ENCODE measurements at regions of chr14 and their contacts with region 1.

Region 1: DNA sequence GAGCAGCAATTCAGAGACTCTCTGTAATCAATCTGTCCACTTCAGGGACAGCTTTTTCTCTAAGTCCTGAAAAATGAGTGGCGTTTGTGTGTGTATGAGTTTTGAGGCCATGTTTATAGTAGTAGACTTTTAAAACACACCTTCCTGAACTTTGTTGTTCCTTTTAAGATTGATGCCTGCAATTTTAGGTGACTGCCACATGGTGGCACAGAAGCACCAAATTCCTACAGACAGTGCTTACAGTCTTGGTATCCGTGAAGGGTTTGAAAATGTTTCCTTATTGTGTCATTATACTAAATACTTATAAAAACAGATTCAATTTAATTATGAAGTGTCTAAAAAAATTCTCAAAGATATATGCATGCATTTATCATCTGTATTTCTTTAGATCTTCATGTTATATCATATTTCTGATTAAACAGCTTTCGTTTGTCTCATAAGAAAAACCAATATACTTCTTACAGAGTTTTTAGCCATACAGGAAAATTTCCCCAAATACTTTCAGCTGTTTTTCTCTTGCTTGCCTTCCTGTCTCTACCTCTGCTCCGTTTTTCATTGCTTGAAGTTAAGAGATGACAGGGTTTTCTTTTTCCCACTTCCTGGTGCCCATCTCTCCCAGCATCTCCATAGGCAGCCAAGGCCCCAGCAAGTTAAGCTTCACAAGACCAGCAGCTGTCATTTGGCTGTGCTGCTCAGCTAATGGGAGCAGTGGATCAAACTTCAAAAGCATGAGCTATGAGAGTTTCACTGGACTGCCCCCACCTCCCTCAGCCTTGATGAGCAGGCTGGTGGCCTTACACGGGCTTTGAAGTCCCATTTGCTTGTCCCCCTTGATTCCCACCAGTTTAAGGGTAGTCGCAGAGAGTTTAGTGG is 259.6 kb downstream of the AKAP6 start:
- DNase-seq: peak; percentile 65
- ATAC-seq: peak; percentile 81
- H3K4me3 ChIP-seq: no peak overlapping the region
- H3K27ac ChIP-seq: no peak overlapping the region
- H3K4me1 ChIP-seq: peaks cover 5% of the 10 kb centered on the region
- H3K27me3 ChIP-seq: no peaks in the 10 kb centered on the region
- CTCF ChIP-seq: peak; percentile 87
- POLR2A ChIP-seq: peak; percentile 45; the same call in 1 of the 2 replicates
- RAD21 ChIP-seq: peak; percentile 91

Region 2: DNA sequence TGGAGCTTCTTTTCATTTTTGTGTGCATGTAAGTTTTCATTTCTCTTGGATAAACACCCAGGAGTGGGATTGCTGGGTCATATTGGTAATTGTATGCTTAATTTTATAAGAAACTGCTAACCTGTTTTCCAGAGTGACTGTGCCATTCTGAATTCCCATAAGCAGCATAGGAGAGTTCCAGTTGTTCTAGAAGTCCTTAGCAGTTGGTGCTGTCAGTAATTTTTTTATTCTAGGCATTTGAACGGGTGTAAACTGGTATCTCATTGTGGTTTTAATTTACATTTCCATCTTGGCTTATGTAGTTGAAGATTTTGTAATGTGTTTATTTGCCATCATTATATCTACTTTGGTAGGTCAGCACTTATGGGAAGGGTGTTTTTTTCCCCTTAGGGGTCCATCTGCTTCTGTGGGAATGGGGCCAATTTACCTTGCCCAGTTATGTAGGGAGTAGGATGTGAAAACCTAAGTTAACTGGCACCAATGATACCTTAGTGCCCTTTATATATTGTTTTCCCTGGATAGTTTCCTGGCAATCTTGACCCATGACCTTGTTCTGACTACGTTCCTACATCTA is 56.7 kb before region 1 on chr14:
- CTCF ChIA-PET with region 1: no interaction called
- POLR2A ChIA-PET with region 1: no interaction called
- dilution Hi-C with region 1: no loop called
- in situ Hi-C with region 1: no loop called
- intact Hi-C with region 1: no loop called
- DNase-seq: no peak
- ATAC-seq: no peak
- H3K4me3 ChIP-seq: no peak overlapping the region
- H3K27ac ChIP-seq: no peak overlapping the region
- H3K4me1 ChIP-seq: no peaks in the 10 kb centered on the region
- H3K27me3 ChIP-seq: peaks cover 9% of the 10 kb centered on the region
- CTCF ChIP-seq: no peak
- POLR2A ChIP-seq: no peak
- RAD21 ChIP-seq: no peak

Region 3: GRCh38 chr14:32542507-32542906 is 46.2 kb before region 1 on chr14:
- CTCF ChIA-PET with region 1: no interaction called
- POLR2A ChIA-PET with region 1: no interaction called
- dilution Hi-C with region 1: no loop called
- in situ Hi-C with region 1: no loop called
- intact Hi-C with region 1: no loop called
- DNase-seq: no peak
- ATAC-seq: no peak
- H3K4me3 ChIP-seq: no peak overlapping the region
- H3K27ac ChIP-seq: no peak overlapping the region
- H3K4me1 ChIP-seq: no peaks in the 10 kb centered on the region
- H3K27me3 ChIP-seq: 0 out of 2 replicates have a peak, but pooled peaks cover 2% of the 10 kb centered on the region
- CTCF ChIP-seq: no peak
- POLR2A ChIP-seq: no peak
- RAD21 ChIP-seq: no peak

Region 4: GRCh38 chr14:32833168-32833567 is 244.5 kb after region 1 on chr14:
- CTCF ChIA-PET with region 1: no interaction called
- POLR2A ChIA-PET with region 1: no interaction called
- dilution Hi-C with region 1: no loop called
- in situ Hi-C with region 1: no loop called
- intact Hi-C with region 1: loop called (anchors 5 kb)
- DNase-seq: no peak
- ATAC-seq: no peak
- H3K4me3 ChIP-seq: no peak overlapping the region
- H3K27ac ChIP-seq: no peak overlapping the region
- H3K4me1 ChIP-seq: no peaks in the 10 kb centered on the region
- H3K27me3 ChIP-seq: no peaks in the 10 kb centered on the region
- CTCF ChIP-seq: no peak
- POLR2A ChIP-seq: no peak
- RAD21 ChIP-seq: no peak

Region 5: DNA sequence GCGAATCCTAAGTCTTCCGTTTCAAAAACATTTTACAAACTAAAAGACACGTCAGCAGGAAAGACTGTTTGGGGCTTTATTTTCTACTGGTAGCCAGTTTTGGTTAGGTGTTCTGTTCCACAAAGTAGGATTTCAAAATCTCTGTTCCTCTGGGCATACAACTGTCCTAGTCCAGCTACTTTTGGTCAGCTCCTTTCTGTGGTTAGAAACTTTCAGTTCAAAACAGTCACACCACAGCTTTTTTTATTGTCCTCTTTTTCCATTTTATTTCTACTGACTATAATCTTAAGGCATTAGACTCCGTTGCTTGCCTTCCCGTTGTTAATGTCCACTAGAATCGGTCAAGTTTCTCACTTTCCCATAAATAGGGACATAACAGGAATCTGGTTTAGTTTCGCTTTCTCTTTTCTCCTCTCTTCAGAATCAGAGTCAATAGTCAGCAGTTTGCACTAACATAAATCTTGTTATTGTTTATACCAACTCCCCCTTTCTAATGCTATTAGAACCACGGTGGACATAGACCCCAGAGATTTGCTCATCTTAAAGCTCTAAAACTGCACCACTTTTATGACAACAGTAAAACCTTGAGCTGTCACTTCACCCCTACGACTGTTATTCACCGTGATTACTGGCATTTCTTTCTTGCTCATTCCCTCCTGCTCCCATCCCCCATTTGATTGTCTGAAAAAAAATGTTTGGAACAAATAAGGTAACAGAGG is 308.5 kb after region 1 on chr14:
- CTCF ChIA-PET with region 1: interaction called, 3 read pairs
- POLR2A ChIA-PET with region 1: no interaction called
- dilution Hi-C with region 1: no loop called
- in situ Hi-C with region 1: no loop called
- intact Hi-C with region 1: loop called (anchors 10 kb)
- DNase-seq: peak; percentile 7
- ATAC-seq: peak; percentile 49
- H3K4me3 ChIP-seq: peak overlapping the region; percentile 70
- H3K27ac ChIP-seq: no peak overlapping the region
- H3K4me1 ChIP-seq: no peaks in the 10 kb centered on the region
- H3K27me3 ChIP-seq: no peaks in the 10 kb centered on the region; the same call in 1 of the 2 replicates
- CTCF ChIP-seq: no peak
- POLR2A ChIP-seq: no peak
- RAD21 ChIP-seq: no peak

Region 6: DNA sequence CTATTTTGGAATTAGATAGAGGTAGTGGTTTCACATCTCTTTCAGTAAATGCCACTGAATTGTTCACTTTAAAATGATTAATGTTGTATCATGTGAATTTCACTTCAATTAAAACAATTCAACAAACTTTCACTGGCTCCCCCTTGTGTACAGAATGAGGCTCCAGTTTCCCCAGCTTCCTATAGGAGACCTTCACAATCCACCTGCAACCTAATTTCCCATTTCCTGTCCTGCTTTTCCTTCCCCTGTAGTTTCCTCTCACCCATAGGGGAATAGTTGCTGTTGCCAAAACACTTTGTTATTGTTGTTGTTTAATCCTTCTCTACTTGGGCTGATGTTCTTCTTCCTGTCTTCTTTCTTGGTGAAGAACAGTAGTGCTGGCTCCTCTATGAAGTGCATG is 409.7 kb after region 1 on chr14:
- CTCF ChIA-PET with region 1: no interaction called
- POLR2A ChIA-PET with region 1: no interaction called
- dilution Hi-C with region 1: no loop called
- in situ Hi-C with region 1: no loop called
- intact Hi-C with region 1: loop called (anchors 1 kb)
- DNase-seq: peak; percentile 9
- ATAC-seq: no peak
- H3K4me3 ChIP-seq: no peak overlapping the region
- H3K27ac ChIP-seq: no peak overlapping the region
- H3K4me1 ChIP-seq: no peaks in the 10 kb centered on the region
- H3K27me3 ChIP-seq: no peaks in the 10 kb centered on the region
- CTCF ChIP-seq: peak; percentile 55
- POLR2A ChIP-seq: no peak
- RAD21 ChIP-seq: peak; percentile 40; the same call in 1 of the 2 replicates

Measured in IMR-90 (cell line).